SK-N-SH (cell line): ENCODE measurements at regions of chr11 and their contacts with region 1.

Region 1: GRCh38 chr11:128831174-128832120 is 35.6 kb downstream of the KCNJ1 start:
- DNase-seq: peak; percentile 79
- H3K4me3 ChIP-seq: peak overlapping the region in 1 of 2 experiments; percentile 34; a peak in 1 of 4 replicates
- H3K27ac ChIP-seq: peak overlapping the region in 1 of 2 experiments; percentile 27; a peak in 1 of 4 replicates
- H3K4me1 ChIP-seq: peaks cover 0 to 6% of the 10 kb centered on the region in 2 experiments; a peak in 1 of 4 replicates
- H3K27me3 ChIP-seq: no peaks in the 10 kb centered on the region
- CTCF ChIP-seq: peak; percentile 90
- EP300 ChIP-seq: no peak
- RAD21 ChIP-seq: peak; percentile 93

Region 2: GRCh38 chr11:128146926-128147605 is 684.4 kb before region 1 on chr11:
- CTCF ChIA-PET with region 1: interaction called, 14 read pairs
- POLR2A ChIA-PET with region 1: no interaction called
- DNase-seq: no peak
- H3K4me3 ChIP-seq: no peak overlapping the region
- H3K27ac ChIP-seq: no peak overlapping the region
- H3K4me1 ChIP-seq: peaks cover 0 to 2% of the 10 kb centered on the region in 2 experiments; a peak in 1 of 4 replicates
- H3K27me3 ChIP-seq: no peaks in the 10 kb centered on the region
- CTCF ChIP-seq: no peak
- EP300 ChIP-seq: no peak
- RAD21 ChIP-seq: no peak

Region 3: DNA sequence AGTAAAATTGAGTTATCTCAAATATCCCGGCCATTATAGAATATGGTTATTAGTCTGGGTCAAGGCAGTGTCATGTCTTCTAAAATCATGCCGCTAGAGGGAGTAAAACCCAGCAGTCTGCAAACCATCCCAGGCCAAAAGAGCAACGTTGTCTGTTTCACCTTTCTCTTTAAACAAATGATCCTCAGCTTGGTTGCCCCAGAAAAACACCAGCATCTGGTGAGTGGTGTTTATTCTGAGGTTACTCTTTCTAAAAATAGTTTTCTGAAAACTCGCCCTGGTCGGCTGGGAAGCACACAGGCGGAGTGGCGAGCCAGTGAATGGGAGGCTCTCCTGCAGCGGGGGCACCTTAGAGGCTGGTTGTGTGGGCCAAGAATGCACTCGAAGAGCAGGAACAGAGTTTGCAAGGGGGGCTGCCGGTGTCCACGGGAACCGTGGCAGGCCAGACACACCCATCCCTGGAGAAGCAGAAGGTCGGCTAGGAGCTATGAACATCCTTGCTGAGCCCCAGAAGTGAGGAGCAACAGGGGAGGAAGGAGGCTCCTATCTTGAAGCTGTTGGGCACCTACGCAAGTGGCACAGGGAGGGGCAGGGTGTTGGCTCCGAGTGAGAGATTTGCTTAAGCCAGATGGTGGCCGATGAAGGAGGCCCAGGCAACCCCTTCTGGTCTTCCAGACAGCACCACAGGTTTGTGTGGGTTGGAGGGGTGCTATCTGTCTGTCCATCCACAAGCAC is 541.2 kb before region 1 on chr11:
- CTCF ChIA-PET with region 1: interaction called, 11 read pairs
- POLR2A ChIA-PET with region 1: no interaction called
- DNase-seq: peak; percentile 68
- H3K4me3 ChIP-seq: no peak overlapping the region; a peak in 1 of 4 replicates
- H3K27ac ChIP-seq: peak overlapping the region; percentile 42 to 60; a peak in 3 of 4 replicates
- H3K4me1 ChIP-seq: peaks cover 0 to 16% of the 10 kb centered on the region in 2 experiments; a peak in 2 of 4 replicates
- H3K27me3 ChIP-seq: no peaks in the 10 kb centered on the region
- CTCF ChIP-seq: peak; percentile 87
- EP300 ChIP-seq: no peak; a peak in 1 of 4 replicates
- RAD21 ChIP-seq: peak; percentile 99

Region 4: GRCh38 chr11:128548655-128549255 is 282.7 kb before region 1 on chr11:
- CTCF ChIA-PET with region 1: no interaction called
- POLR2A ChIA-PET with region 1: no interaction called
- DNase-seq: peak; percentile 77
- H3K4me3 ChIP-seq: no peak overlapping the region
- H3K27ac ChIP-seq: no peak overlapping the region
- H3K4me1 ChIP-seq: no peaks in the 10 kb centered on the region; a peak in 1 of 4 replicates
- H3K27me3 ChIP-seq: no peaks in the 10 kb centered on the region
- CTCF ChIP-seq: no peak
- EP300 ChIP-seq: no peak
- RAD21 ChIP-seq: no peak

Region 5: GRCh38 chr11:128776424-128777284 is 54.8 kb before region 1 on chr11:
- CTCF ChIA-PET with region 1: interaction called, 19 read pairs
- POLR2A ChIA-PET with region 1: no interaction called
- DNase-seq: peak; percentile 87
- H3K4me3 ChIP-seq: peak overlapping the region in 1 of 2 experiments; percentile 25; a peak in 1 of 4 replicates
- H3K27ac ChIP-seq: peak overlapping the region in 1 of 2 experiments; percentile 64; a peak in 1 of 4 replicates
- H3K4me1 ChIP-seq: peaks cover 0 to 19% of the 10 kb centered on the region in 2 experiments; a peak in 1 of 4 replicates
- H3K27me3 ChIP-seq: no peaks in the 10 kb centered on the region
- CTCF ChIP-seq: peak; percentile 44
- EP300 ChIP-seq: no peak
- RAD21 ChIP-seq: peak; percentile 24

Region 6: DNA sequence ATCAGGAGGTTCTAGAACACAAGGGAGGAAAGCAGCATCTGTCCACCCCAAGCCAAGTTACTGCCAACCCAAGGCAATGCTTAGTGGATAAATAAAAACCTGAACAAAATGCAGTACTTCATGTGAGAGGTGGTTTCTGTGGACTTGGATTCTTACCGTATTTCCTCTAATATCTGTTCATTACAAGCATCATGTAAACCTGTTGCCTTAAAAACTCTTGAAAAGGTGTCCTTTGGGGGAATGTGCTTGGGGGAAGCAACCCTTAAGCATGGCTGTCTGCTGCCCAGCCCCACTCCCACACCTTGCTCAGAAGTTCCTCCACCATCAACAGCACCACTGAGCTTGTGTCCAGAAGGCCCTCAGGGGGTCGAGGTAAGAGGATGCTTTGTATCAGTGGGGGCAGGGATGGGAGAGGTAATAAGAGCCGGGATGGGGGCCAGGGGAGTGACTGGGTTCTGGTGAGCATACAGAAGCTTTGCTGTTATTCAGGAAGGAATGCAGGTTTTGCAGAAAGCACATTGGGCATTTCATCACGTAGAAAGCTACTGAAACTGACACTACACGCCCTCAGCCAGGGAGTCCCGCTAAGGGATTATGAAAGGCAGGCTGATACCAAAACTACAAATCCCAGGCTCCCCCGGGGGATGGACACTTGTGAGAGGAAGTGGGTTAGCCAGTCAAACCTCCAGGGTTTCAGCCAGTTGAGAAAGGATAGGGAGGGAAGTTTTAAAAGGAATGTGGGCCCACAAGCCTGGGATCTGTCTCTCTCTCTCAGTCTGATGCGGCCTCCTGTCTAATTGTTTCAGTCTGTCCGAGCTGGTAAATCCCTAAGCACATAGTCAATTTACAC is 16.4 kb before region 1 on chr11:
- CTCF ChIA-PET with region 1: interaction called, 42 read pairs
- POLR2A ChIA-PET with region 1: no interaction called
- DNase-seq: peak; percentile 49
- H3K4me3 ChIP-seq: no peak overlapping the region
- H3K27ac ChIP-seq: no peak overlapping the region; a peak in 1 of 4 replicates
- H3K4me1 ChIP-seq: peaks cover 0 to 5% of the 10 kb centered on the region in 2 experiments; a peak in 2 of 4 replicates
- H3K27me3 ChIP-seq: no peaks in the 10 kb centered on the region
- CTCF ChIP-seq: no peak
- EP300 ChIP-seq: no peak
- RAD21 ChIP-seq: no peak